Esophagus squamous epithelium (tissue), 5 donors: ENCODE measurements at regions of chr10 and their contacts with region 1.

Region 1: DNA sequence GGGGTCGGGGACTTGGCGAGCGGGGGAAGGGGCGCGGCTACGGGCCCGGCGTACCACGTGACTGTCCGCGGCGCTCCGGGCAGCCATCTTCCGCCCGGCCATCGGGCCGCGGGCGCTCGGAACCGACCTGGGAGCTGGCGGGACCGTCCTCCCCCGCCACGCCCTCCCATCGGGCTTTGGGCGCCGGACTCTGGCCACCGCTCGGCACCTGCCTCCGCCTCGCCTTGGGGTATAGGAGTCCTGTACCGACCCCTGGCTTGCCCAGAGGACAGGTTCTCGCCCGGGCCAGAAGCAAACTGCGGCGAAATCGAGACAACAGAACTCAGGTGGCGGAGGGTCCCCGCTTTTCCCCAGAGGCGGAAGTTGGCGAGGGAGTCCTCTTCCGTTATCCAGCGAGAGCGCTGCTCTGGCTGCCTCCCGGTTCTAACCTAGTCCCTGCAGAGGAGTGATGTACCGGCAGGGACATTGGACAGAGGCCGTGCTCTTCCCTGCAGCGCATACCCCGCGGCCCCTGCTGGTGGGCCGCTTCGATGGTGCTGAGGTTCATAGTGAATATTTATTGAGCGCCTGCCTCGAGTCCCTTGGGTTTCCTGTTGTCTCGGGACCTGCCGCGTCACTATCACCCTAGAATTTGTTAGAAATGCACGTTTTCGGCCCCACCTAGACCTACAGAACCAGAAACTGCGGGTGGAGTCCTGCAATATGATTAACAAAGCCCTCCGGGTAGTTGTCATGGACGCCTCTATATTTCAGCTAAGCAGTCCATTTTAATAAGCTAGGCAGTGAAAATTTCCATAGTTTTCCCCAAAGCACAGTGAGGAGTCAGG is 1.3 kb upstream of the SGMS1 start:
- DNase-seq: peak; percentile 27
- H3K4me3 ChIP-seq: peak overlapping the region; percentile 67 to 95 (median 90)
- H3K27ac ChIP-seq: peak overlapping the region; percentile 96 to 100 (median 99)
- H3K4me1 ChIP-seq: peaks cover 19 to 41% (median 24%) of the 10 kb centered on the region in 3 donors
- H3K27me3 ChIP-seq: no peaks in the 10 kb centered on the region
- CTCF ChIP-seq: peak in 5 of 6 experiments; percentile 42 to 62 (median 54)
- POLR2A ChIP-seq: peak in 1 of 4 donors; percentile 4

Region 2: DNA sequence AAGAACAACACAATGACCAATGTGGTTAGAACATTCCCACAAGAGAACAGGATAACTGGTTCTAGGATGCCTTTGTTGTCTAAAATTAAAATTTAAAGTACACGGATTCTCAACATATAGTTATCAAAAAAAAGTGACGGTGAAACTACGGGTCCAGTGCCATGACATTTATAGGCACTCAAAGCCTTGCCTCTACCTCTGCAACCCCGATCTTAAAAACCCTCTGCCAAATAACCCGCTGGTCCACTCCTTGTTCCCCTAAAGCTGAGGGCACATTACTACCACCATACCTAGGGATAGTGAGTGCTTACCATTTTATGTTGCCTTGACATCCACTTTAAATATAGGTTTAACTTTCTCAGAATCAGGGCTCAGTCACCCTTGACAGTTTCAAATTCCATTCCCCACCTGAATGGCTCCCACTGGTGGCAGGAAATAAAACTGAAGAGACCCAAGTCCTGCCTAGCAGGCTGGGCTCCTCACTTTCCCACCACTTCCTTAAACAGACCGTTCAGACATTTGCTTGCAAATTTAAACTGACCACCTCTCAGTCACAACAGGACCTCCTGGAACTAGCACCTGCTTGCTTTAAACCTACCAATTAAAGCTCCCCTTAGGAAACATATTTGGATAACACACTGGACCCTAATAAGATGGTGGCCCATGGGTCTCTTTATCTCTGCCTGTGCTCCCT is 203.9 kb before region 1 on chr10:
- intact Hi-C with region 1: loop called (anchors 10 kb)
- DNase-seq: no peak
- H3K4me3 ChIP-seq: no peak overlapping the region
- H3K27ac ChIP-seq: peak overlapping the region in 2 of 4 donors; percentile 9 to 22
- H3K4me1 ChIP-seq: peaks cover 6 to 42% (median 17%) of the 10 kb centered on the region in 3 donors
- H3K27me3 ChIP-seq: no peaks in the 10 kb centered on the region
- CTCF ChIP-seq: peak; percentile 58 to 80 (median 70)
- POLR2A ChIP-seq: no peak

Region 3: DNA sequence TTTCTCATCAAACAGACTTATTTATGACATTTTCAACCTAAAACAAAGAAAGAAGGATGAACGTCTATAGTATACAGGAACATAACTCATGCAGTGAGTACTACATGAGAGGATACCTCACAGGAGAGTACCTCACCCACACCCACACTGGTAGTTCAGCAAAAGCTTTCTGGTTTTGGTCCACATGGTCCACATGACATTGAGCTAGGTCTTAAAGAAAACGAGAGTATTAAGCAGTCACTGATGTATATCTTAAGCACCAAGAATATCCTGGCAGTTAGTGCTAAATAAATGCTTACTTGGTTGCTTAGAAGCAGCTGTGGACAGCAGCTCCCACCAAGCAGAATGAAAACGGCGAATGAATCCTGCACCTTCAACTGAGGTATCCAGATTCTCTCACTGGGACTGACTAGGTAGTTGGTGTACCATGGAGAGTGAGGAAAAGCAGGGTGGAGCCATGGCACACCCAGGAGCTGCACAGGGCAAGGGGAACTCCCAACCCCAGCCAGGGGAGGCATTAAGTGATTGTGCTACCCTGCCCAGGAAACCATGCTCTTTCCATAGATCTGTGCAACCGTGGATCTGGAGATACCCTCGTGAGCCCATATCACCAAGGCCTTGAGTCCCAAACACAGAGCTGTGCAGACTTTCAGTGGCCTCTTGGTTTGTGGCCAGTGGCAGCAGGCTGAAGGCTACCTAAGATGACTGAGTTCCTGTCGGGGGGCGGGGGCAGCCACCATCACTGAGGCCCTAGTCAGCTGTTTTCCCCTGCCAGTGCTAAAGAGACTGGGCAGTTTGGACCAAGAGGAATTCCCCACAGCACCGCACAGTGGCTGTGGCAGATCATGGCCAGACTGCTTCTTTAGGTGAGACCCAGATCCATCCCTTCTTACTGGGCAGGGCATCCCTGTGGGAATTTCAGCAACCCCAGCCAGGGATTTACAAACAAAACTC is 144.7 kb before region 1 on chr10:
- intact Hi-C with region 1: no loop called
- DNase-seq: no peak
- H3K4me3 ChIP-seq: no peak overlapping the region
- H3K27ac ChIP-seq: no peak overlapping the region
- H3K4me1 ChIP-seq: peaks cover 0 to 3% (median 0%) of the 10 kb centered on the region in 3 donors
- H3K27me3 ChIP-seq: no peaks in the 10 kb centered on the region
- CTCF ChIP-seq: no peak
- POLR2A ChIP-seq: no peak

Region 4: DNA sequence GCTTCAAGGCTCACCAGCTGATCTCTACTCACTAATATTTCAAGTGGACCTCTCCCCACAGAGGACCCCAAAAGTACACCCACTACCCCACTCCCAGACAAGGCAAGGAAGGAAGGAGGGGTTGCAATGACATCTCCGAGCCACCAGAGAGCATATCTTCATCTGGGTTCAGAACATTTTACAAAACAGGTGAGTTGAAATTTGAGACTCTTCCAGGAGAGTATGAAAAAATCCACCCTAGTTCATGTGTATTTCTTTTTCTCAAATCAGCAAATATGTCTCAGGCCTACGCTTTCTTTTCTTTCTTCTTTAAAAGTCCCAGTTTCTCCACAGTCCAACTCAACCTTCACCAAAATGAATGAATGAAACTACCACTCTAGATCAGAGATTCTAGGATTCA is 63.3 kb before region 1 on chr10:
- intact Hi-C with region 1: loop called (anchors 5 kb)
- DNase-seq: no peak
- H3K4me3 ChIP-seq: no peak overlapping the region
- H3K27ac ChIP-seq: peak overlapping the region in 3 of 4 donors; percentile 51 to 53 (median 52)
- H3K4me1 ChIP-seq: peaks cover 9 to 40% (median 10%) of the 10 kb centered on the region in 3 donors
- H3K27me3 ChIP-seq: no peaks in the 10 kb centered on the region
- CTCF ChIP-seq: peak in 5 of 6 experiments; percentile 57 to 68 (median 62)
- POLR2A ChIP-seq: no peak

Region 5: DNA sequence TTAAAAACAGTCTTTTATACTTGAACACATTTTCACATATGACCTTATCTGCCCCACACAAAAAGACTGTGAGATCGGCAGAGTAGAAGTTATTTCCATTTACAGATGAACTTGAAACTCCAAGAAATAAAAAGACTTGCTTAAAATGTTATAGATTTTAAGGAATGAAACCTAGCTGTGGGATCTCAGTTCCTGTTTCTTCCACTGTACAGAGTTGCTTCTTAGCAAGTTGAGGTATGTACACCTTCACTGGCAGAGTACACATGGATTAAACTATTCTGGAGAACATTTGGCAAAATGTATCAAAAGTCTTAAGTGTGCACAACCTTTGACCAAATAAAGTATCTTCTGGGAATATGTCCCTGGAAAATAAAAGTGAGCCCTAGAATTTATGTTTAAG is 212.0 kb after region 1 on chr10:
- intact Hi-C with region 1: no loop called
- DNase-seq: no peak
- H3K4me3 ChIP-seq: no peak overlapping the region
- H3K27ac ChIP-seq: no peak overlapping the region
- H3K4me1 ChIP-seq: no peaks in the 10 kb centered on the region
- H3K27me3 ChIP-seq: no peaks in the 10 kb centered on the region
- CTCF ChIP-seq: no peak
- POLR2A ChIP-seq: no peak